Posterior vena cava (tissue), 2 donors: ENCODE measurements at regions of chr10 and their contacts with region 1.

Region 1: GRCh38 chr10:17742918-17743317 is 9.1 kb upstream of the TMEM236 start:
- DNase-seq: peak; percentile 84

Region 2: DNA sequence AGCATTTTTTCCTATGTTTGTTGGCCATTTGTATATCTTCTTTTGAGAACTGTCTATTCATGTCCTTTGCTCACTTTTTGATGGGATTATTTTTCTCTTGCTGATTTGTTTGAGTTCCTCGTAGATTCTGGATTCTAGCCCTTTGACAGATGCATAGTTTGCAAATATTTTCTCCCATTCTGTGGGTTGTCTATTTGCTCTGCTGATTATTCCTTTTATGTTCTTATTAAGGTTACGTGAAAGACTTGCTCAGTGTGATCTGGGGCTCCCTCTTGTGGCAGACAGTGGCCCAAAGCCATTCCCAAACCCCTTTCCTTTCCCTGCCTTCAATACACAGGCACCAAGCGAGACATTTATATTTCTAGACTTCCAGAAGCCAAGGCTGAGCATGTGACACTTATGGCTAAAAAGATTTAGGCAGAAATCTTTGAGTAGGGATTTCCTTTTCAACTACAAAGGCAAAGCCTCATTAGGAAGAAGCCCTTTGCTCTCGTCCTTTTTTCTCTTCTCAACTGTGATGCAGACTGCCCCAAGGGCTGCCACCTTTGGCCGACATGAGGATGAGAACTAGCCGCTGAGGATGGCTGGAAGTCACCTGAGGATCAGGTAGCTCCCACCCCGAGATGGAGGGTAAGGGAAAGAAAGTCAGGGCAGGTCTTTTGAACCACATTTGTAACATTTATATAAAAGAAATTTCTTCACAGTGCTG is 312.1 kb before region 1 on chr10:
- intact Hi-C with region 1: no loop called
- DNase-seq: peak; percentile 87

Region 3: DNA sequence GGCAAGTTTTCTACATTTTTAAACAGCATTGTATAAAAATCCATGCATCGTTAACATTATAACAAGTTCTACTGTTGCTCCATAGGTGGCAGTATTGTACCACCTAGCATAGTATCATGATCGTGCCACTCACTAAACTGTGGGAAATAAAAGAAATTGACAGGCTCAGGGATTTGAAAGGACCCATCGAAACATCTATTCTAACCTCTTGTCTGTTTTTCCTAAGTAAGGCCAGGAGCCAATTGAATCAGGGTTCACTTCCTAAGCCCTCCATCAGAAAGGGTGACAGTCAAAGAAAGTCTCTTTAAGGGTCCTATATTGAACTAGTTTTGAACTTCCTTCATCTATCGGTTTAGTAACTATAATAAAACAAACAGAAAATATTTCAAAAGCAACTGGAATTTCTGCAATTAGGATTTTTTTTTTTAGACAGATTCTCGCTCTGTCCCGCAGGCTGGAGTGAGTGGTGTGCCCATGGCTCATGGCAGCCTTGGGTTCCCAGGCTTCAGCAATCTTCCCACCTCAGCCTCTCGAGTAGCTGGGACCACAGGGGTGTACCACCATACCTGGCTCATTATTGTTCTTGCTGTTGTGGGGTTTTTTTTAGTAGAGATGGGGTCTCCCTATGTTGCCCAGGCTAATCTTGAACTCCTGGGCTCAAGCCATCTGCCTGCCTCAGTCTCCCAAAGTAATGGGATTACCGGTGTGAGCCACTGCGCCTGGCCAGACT is 135.2 kb before region 1 on chr10:
- intact Hi-C with region 1: loop called (anchors 5 to 10 kb)
- DNase-seq: no peak

Region 4: DNA sequence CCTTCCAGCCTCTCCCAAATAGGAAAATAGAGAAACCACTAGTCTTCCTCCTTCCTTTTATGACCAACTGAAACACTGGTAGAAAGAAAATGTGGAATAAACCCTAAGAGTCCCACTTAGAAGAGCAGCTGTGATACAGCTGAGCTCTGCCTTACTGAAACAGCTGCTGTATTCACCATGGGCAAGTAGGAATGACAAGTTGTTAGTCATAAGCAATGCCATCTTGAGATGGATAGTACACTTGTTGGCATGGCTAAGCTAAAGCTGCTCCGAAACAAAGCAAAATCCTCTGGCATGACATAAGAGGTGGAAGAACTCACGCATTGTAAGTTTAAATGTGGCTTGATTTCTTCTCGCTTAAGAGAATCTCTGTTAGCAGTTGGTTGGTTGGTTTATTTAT is 39.2 kb before region 1 on chr10:
- intact Hi-C with region 1: loop called in 1 of 2 experiments (anchors 2 kb)
- DNase-seq: no peak